ENCODE measurements at regions of chr2 and their contacts with region 1.

Region 1: GRCh38 chr2:134118279-134119116 is 135.4 kb upstream of the MGAT5 start:
- DNase-seq: peak; percentile 96
- H3K4me3 Mint-ChIP-seq: no peak overlapping the region
- H3K27ac Mint-ChIP-seq: no peak overlapping the region
- H3K4me1 Mint-ChIP-seq: peaks cover 32% of the 10 kb centered on the region
- H3K27me3 Mint-ChIP-seq: peaks cover 3% of the 10 kb centered on the region

Region 2: GRCh38 chr2:133886735-133887660 is 231.5 kb before region 1 on chr2:
- CTCF ChIA-PET with region 1: interaction called, 6 read pairs
- intact Hi-C with region 1: loop called (anchors 2 kb)
- DNase-seq: peak; percentile 66
- H3K4me3 Mint-ChIP-seq: no peak overlapping the region
- H3K27ac Mint-ChIP-seq: no peak overlapping the region
- H3K4me1 Mint-ChIP-seq: no peaks in the 10 kb centered on the region
- H3K27me3 Mint-ChIP-seq: peaks cover 5% of the 10 kb centered on the region

Region 3: GRCh38 chr2:133993160-133993559 is 125.3 kb before region 1 on chr2:
- CTCF ChIA-PET with region 1: no interaction called
- intact Hi-C with region 1: no loop called
- DNase-seq: no peak
- H3K4me3 Mint-ChIP-seq: no peak overlapping the region
- H3K27ac Mint-ChIP-seq: no peak overlapping the region
- H3K4me1 Mint-ChIP-seq: no peaks in the 10 kb centered on the region
- H3K27me3 Mint-ChIP-seq: peaks cover 12% of the 10 kb centered on the region

Region 4: DNA sequence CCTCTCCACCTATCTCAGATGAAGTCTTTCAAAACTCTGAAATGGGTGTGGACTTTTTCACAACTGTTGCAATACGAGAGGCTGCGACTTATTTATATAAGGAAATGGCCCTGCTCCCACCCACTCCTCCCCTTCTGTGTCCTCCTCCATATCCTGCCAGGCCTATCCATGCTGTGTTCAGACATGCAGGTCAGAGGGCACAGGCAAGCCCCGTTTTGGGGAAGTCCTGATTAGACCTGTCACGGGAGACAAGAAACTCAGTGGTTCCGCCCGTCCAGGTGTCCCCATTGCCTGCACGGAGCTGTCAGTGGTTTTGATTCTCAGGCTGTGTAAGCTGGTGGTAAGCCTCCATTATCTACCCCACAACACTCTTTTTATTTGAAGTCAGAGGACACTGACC is 35.7 kb after region 1 on chr2:
- CTCF ChIA-PET with region 1: no interaction called
- intact Hi-C with region 1: no loop called
- DNase-seq: no peak
- H3K4me3 Mint-ChIP-seq: no peak overlapping the region
- H3K27ac Mint-ChIP-seq: no peak overlapping the region
- H3K4me1 Mint-ChIP-seq: peaks cover 22% of the 10 kb centered on the region
- H3K27me3 Mint-ChIP-seq: no peaks in the 10 kb centered on the region

Region 5: DNA sequence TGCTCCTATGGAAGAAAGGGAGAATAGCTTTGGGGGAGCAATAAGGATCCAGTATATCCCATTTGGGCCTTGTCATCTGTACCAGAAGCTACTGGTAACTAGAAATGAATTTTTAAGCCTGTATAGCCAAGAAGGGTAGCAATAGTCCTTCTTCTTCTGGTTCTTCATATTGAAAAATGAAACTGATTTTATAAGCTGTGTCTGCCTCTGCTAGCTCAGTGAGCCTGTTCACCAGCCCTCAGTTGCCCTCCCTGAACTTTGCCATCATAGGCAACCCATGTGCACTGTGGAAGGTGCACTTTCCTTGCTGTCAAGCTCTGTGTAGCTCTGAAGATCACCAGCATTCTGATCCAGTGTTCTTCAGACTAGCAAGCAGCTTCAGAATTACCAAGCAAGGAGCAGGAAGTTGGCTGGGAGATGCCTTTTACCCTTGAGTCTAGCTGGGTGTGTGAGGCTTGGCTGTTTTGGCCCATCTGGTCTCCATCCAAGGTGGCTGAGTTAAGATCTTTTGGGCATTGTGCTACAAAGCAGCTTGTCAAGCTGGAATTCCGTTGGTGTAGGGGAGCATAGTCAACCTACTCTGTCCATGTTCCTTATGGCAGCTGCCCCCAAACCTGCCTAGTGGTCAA is 79.6 kb after region 1 on chr2:
- CTCF ChIA-PET with region 1: interaction called, 25 read pairs
- intact Hi-C with region 1: loop called (anchors 1 kb)
- DNase-seq: no peak
- H3K4me3 Mint-ChIP-seq: peak overlapping the region; percentile 15
- H3K27ac Mint-ChIP-seq: peak overlapping the region; percentile 77
- H3K4me1 Mint-ChIP-seq: peaks cover 64% of the 10 kb centered on the region
- H3K27me3 Mint-ChIP-seq: no peaks in the 10 kb centered on the region

Region 6: DNA sequence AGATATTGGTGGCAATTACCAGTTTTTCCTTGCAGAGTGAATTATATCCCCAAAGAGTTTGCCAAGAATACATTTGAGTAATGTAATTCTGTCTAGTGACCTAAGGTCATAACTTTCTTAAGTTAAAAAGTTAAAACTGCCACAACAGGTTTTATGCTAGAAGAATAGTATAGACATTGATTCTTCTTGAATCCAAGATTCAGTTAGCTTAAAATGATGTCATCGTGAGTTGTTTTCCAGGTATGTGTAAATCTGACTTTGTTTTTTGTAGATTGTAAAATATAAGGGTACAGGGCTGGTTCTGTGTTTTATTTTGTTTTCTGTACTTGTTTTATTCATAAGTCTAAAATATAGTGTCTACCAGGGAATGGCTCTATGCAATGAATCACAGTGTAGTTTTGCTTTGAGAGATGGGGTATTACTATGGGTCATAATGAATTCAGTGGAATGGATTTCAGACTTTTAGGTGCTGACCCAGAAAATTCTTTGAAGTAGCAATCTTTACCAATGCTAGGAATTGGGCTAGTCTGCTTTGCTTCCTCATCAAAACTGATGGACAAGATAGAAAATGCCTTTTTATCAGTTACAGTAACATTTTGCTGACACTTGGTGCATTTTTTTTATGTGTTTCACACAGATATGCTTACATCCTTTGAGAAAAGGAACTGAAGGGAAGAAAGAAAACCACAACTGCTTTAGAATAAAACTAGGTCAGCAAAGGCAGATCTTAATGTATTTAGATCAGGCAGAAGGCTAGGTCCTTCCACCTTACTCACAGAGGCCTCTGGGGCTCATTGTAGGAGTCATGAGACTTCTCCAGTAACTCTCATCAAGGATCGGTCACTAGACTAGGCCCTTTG is 114.6 kb after region 1 on chr2:
- CTCF ChIA-PET with region 1: interaction called, 5 read pairs
- intact Hi-C with region 1: loop called (anchors 1 kb)
- DNase-seq: peak; percentile 47
- H3K4me3 Mint-ChIP-seq: no peak overlapping the region
- H3K27ac Mint-ChIP-seq: peak overlapping the region; percentile 80
- H3K4me1 Mint-ChIP-seq: peaks cover 70% of the 10 kb centered on the region
- H3K27me3 Mint-ChIP-seq: no peaks in the 10 kb centered on the region

Region 7: DNA sequence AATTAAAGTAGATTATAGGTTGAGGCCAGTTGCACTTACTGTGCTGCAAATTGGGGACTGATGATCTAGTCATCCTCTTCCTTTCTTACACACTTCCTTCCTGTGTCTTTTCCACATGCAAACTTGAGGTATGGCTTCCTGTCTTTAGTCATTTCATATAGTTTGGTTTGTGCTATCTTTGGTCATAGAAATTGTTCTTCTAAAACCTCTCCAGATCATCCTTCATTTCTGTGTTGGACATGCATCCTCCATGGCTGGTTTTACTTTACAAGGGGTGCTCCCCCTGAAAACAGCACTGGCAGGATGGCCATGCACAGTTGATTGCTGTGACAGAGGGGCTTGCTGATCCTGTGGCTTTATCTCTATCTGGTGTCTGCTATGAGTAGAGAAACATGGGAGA is 171.9 kb after region 1 on chr2:
- CTCF ChIA-PET with region 1: interaction called, 3 read pairs
- intact Hi-C with region 1: loop called (anchors 1 kb)
- DNase-seq: peak; percentile 30
- H3K4me3 Mint-ChIP-seq: no peak overlapping the region
- H3K27ac Mint-ChIP-seq: no peak overlapping the region
- H3K4me1 Mint-ChIP-seq: peaks cover 24% of the 10 kb centered on the region
- H3K27me3 Mint-ChIP-seq: no peaks in the 10 kb centered on the region

Region 8: GRCh38 chr2:134454931-134455330 is 336.4 kb after region 1 on chr2:
- CTCF ChIA-PET with region 1: interaction called, 28 read pairs
- intact Hi-C with region 1: loop called (anchors 1 kb)
- DNase-seq: no peak
- H3K4me3 Mint-ChIP-seq: no peak overlapping the region
- H3K27ac Mint-ChIP-seq: no peak overlapping the region
- H3K4me1 Mint-ChIP-seq: no peaks in the 10 kb centered on the region
- H3K27me3 Mint-ChIP-seq: no peaks in the 10 kb centered on the region

Region 9: DNA sequence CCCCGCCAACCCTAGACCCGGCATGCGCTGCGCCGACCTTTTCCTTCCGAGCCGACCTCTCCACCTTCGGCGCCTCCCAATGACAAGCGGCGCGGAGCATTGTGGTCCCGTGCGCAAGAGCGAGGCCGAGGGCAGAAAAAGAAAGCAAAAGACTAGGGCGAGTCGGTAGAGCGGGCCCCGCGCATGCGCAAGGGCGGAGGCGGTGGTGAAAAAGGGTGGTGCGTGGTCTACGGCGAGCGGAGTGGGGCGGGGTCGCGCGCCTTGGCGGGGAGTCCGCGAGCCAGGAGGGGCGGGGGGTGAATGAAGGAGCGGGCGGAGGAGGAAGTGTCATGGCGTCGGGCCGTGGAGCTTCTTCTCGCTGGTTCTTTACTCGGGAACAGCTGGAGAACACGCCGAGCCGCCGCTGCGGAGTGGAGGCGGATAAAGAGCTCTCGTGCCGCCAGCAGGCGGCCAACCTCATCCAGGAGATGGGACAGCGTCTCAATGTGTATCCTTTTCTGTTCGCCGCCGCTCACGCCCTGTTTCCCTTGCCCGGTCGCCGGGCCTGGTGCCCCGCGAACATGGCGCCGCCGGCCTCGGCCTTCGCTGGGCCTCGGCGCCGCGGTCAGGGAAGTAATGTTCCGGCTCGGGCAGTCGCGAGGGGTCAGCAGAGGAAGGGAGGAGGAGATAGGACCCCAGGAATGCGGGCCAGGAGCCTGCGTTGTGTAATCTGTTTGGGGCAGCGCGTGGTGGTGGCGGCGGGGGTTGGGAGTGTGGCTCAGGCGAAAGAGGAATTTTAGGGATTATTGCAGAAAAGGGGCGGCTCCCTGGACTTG is 800.2 kb after region 1 on chr2 and contains the start of gene CCNT2:
- CTCF ChIA-PET with region 1: no interaction called
- intact Hi-C with region 1: loop called (anchors 1 kb)
- DNase-seq: peak; percentile 99
- H3K4me3 Mint-ChIP-seq: peak within 1 kb of the TSS; percentile 95
- H3K27ac Mint-ChIP-seq: peak within 1 kb of the TSS; percentile 98
- H3K4me1 Mint-ChIP-seq: peaks cover 24% of the 10 kb centered on the region
- H3K27me3 Mint-ChIP-seq: no peaks in the 10 kb centered on the region
- total RNA-seq, gene CCNT2: 31.9 to 33.2 TPM